HepG2 (cell line): ENCODE measurements at regions of chrX and their contacts with region 1.

Region 1: GRCh38 chrX:74207539-74207938 is 96.4 kb upstream of the ZCCHC13 start:
- DNase-seq: no peak
- ATAC-seq: no peak
- H3K4me3 ChIP-seq: no peak overlapping the region
- H3K27ac ChIP-seq: no peak overlapping the region
- H3K4me1 ChIP-seq: no peaks in the 10 kb centered on the region
- H3K27me3 ChIP-seq: no peaks in the 10 kb centered on the region
- CTCF ChIP-seq: no peak
- EP300 ChIP-seq: no peak
- POLR2A ChIP-seq: no peak
- RAD21 ChIP-seq: no peak

Region 2: DNA sequence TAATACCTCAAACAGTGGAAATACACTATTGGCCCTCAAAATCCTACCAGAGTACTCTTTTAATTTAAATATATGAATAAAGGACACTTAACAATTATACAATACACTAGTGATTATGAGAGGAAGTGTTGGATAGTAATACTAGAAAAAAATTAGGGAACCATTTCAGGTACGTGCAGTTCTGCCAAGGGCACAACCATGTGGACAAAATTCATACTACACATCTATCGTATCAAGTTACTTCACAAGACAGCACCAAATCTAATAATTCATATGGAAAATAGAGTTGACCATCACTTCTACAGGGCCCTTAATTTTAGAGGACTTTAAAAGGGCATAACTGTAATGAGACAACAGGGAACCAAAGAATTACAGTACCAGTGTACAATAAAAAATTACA is 27.3 kb after region 1 on chrX:
- CTCF ChIA-PET with region 1: no interaction called
- POLR2A ChIA-PET with region 1: no interaction called
- in situ Hi-C with region 1: no loop called
- intact Hi-C with region 1: loop called (anchors 1 kb)
- DNase-seq: no peak
- ATAC-seq: no peak
- H3K4me3 ChIP-seq: no peak overlapping the region
- H3K27ac ChIP-seq: no peak overlapping the region
- H3K4me1 ChIP-seq: 0 out of 2 replicates have a peak, but pooled peaks cover 2% of the 10 kb centered on the region
- H3K27me3 ChIP-seq: no peaks in the 10 kb centered on the region
- CTCF ChIP-seq: no peak
- EP300 ChIP-seq: no peak
- POLR2A ChIP-seq: no peak
- RAD21 ChIP-seq: no peak